ENCODE measurements at regions of chr5 and their contacts with region 1.

Region 1: GRCh38 chr5:93620487-93621326 is 37.7 kb downstream of the NR2F1 start:
- DNase-seq: peak; percentile 47 to 80
- ATAC-seq: peak; percentile 87 to 92
- H3K4me3 ChIP-seq: peak overlapping the region; percentile 87
- H3K27ac ChIP-seq: peak overlapping the region; percentile 78 to 94
- H3K4me1 ChIP-seq: peaks cover 15% of the 10 kb centered on the region
- CTCF ChIP-seq: peak; percentile 30; the same call in 1 of the 3 replicates
- EP300 ChIP-seq: no peak
- POLR2A ChIP-seq: peak; percentile 26; the same call in 1 of the 2 replicates
- RAD21 ChIP-seq: peak in 1 of 2 experiments; percentile 42; a peak in 2 of 5 replicates

Region 2: DNA sequence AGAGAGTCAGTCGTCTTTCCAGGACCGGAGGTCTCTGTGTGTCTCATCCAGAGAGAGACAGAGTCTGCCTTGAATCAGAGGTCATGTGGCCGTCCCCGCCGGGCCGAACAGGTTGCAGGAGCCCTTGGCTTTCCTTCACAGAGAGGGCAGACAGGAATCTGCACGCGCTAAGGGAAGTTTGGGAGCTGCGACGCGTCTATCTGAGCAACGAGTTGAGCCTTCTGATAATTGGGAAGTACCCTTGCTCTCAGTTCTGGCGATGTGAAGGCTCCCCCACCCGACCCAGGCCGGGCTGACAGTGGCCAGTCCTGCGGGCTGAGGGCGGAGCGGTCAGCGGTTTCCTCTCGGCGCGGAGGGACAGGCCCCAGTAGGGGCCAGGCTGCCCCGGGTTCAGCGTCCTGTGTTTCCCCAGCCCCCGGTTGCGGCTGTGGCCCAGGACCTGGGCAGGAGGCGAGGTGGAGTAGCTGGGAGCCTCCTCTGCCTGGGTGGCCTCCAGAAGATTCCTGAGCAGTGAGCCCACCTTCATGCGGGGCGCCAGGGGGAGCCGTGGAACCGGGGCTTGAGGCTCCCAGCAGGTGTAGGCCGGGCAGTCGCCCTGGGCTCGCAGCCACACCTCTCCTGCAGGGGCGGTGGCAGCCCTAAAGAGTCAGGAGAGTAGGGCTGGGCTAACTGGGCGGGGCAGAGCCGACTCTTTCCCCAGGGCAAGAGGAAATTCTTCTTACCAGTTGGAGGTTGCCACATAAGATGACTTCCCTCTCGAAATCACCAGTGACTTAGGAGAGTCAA is 23.8 kb before region 1 on chr5:
- CTCF ChIA-PET with region 1: no interaction called
- POLR2A ChIA-PET with region 1: no interaction called
- DNase-seq: peak in 1 of 2 experiments; percentile 32
- ATAC-seq: peak in 1 of 2 experiments; percentile 80; a peak in 3 of 6 replicates
- H3K4me3 ChIP-seq: no peak overlapping the region
- H3K27ac ChIP-seq: no peak overlapping the region
- H3K4me1 ChIP-seq: 0 out of 3 replicates have a peak, but pooled peaks cover 5% of the 10 kb centered on the region
- CTCF ChIP-seq: no peak
- EP300 ChIP-seq: no peak
- POLR2A ChIP-seq: no peak
- RAD21 ChIP-seq: no peak

Region 3: GRCh38 chr5:93607367-93608258 is 13.1 kb before region 1 on chr5:
- CTCF ChIA-PET with region 1: interaction called, 11 read pairs
- POLR2A ChIA-PET with region 1: no interaction called
- DNase-seq: peak; percentile 42 to 57
- ATAC-seq: peak; percentile 72 to 86
- H3K4me3 ChIP-seq: peak overlapping the region; percentile 7; the same call in 2 of the 3 replicates
- H3K27ac ChIP-seq: no peak overlapping the region
- H3K4me1 ChIP-seq: peaks cover 15% of the 10 kb centered on the region; the same call in 2 of the 3 replicates
- CTCF ChIP-seq: peak; percentile 76
- EP300 ChIP-seq: no peak
- POLR2A ChIP-seq: no peak
- RAD21 ChIP-seq: peak; percentile 75 to 77

Region 4: DNA sequence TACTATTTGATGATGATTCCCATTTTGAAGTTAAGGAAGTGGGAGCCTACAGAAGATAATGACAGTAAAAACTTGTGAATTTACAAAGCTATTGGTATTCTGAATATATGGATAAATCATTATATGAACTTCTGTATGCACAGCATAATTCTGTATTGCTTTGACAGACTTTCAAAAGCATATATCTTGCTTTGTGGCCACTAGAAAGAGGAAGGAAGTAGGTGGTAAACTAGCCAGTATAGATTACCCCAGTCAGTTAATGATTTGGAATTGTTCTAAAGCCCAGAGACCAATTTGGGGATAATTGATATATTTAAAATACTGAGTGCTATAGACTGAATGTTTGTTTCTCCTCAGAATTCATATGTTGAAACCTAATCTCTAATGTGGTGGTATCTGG is 15.3 kb after region 1 on chr5:
- CTCF ChIA-PET with region 1: interaction called, 10 read pairs
- POLR2A ChIA-PET with region 1: no interaction called
- DNase-seq: no peak
- ATAC-seq: no peak
- H3K4me3 ChIP-seq: no peak overlapping the region
- H3K27ac ChIP-seq: no peak overlapping the region
- H3K4me1 ChIP-seq: no peaks in the 10 kb centered on the region
- CTCF ChIP-seq: no peak
- EP300 ChIP-seq: no peak
- POLR2A ChIP-seq: no peak
- RAD21 ChIP-seq: no peak

Measured in A549 (cell line).